Heart left ventricle (tissue), 16 donors: ENCODE measurements at regions of chr6 and their contacts with region 1.

Region 1: GRCh38 chr6:111361648-111362047 is 121.4 kb downstream of the REV3L start:
- DNase-seq: peak in 1 of 5 donors; percentile 22
- ATAC-seq: peak in 1 of 4 donors; percentile 69
- H3K4me3 ChIP-seq: no peak overlapping the region
- H3K27ac ChIP-seq: no peak overlapping the region
- H3K4me1 ChIP-seq: peaks cover 0 to 8% (median 0%) of the 10 kb centered on the region in 12 donors
- H3K27me3 ChIP-seq: no peaks in the 10 kb centered on the region
- CTCF ChIP-seq: peak in 10 of 12 donors; percentile 21 to 61 (median 47)
- POLR2A ChIP-seq: no peak

Region 2: GRCh38 chr6:111456208-111456607 is 94.6 kb after region 1 on chr6:
- intact Hi-C with region 1: loop called in 1 of 10 experiments (anchors 10 kb)
- DNase-seq: no peak
- ATAC-seq: no peak
- H3K4me3 ChIP-seq: peak overlapping the region in 1 of 12 donors; percentile 2
- H3K27ac ChIP-seq: no peak overlapping the region
- H3K4me1 ChIP-seq: peaks cover 0 to 21% (median 11%) of the 10 kb centered on the region in 12 donors
- H3K27me3 ChIP-seq: no peaks in the 10 kb centered on the region
- CTCF ChIP-seq: no peak
- POLR2A ChIP-seq: no peak

Region 3: GRCh38 chr6:112096901-112097300 is 735.3 kb after region 1 on chr6:
- intact Hi-C with region 1: no loop called
- DNase-seq: no peak
- ATAC-seq: no peak
- H3K4me3 ChIP-seq: no peak overlapping the region
- H3K27ac ChIP-seq: no peak overlapping the region
- H3K4me1 ChIP-seq: peaks cover 0 to 10% (median 0%) of the 10 kb centered on the region in 12 donors
- H3K27me3 ChIP-seq: no peaks in the 10 kb centered on the region
- CTCF ChIP-seq: no peak
- POLR2A ChIP-seq: no peak